Cardiac septum (tissue), 1 donor: ENCODE measurements at regions of chr10 and their contacts with region 1.

Region 1: DNA sequence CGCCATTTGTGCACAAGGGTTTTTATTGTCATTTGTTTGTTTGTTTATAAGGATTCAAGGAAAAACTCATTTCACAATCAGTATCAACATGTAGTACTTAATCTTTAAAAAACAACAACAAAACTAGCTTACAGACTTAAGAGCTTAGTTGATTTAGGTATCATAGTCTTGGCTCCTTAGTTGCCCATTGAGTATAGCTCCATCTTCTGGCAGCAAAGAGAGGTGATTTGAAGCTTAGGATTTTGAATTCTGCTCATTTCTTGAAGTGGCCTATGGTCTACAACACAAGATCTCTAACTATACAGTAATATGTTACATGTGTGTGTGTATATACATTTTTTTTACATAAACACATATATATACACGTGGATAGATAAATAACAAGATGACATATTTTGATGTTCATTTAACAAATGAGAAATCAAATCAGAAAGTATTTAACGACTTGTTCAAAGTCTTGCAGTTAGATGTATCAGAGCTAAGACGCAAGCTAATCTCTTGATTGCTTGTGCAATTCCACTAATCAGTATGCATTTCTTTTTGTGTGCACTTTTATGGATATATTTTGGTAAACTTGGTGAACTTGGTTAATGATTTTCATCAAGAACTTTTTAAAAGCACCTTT is 307.3 kb downstream of the CAMK1D start:
- DNase-seq: no peak

Region 2: DNA sequence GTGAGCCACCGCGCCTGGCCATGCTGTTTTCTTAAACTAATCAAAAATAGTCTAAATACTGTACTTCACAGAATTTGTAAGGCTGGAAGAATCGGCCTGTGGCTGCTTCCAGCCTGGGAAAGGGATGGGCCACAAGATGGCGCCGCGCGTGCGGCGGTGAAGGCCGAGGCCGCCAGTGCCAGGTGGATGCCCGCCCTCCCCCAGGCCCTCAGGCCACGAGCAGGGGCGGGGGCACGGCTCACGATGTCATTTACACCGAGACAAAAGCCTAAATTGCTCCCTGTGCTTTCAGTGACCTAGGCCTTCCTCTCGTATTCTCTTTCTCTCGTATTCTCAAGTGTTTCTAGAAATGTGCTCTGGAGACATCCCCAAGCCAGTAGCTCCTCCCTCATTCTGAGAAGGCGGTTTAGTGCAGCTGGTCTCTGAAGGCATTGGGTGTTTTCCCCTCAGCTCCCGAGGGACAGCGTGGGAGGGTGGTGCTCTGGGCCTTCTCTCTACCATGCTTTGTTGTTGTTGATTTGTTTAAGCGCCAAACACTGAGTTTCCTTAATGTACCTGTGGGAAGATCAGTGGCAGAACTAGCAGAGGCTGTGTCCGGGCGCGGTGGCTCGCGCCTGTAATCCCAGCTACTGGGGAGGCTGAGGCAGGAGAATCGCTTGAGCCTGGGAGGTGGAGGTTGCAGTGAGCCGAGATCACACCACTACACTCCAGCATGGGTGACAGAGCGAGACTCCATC is 392.3 kb before region 1 on chr10:
- intact Hi-C with region 1: loop called (anchors 2 kb)
- DNase-seq: peak; percentile 92

Region 3: DNA sequence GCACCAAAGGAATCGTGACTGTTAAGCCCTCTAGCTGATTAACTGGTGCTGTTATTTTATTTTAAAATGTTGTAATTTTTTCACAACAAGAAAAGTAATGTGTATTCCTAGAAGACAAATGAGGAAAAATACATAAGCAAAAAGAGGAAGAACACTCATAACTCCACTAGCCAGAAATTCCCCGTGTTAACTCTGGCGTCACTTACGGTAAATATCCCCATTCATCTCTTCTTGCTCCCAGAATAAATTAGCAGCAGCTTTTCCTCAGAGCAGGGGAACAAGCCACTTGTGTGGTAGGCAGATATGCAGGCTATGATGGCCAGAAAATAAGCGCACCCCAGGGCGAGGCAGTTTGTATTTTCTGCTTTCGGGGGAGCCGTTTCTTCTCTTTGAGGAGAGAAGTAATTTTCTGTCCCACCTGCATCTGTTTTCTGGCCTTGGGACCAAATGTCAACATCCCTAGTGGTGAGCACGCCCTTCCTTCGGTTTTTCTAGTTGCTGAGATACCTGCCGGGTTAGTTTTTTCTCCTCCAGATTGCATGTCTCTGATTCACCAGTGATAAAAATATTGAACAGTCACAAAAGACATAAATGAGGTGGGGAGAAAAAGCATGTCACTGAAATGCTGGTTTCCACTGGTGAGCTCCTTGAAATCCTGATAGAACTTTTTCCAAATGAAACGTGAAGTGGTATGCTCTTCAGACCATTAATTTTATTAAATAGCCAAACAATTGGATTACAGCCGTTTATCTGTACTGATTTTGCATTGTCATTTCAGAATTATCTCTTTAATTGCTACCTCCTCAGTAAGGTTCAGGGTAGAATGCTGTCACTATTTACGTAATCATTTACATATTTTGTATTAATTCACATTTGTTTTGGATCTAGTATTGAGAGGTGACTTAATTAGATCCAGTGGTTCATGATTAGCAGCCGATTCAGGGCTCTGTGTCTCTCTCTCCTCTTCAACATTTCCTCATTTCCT is 39.1 kb before region 1 on chr10:
- intact Hi-C with region 1: no loop called
- DNase-seq: no peak

Region 4: GRCh38 chr10:12699258-12699700 is 42.6 kb after region 1 on chr10:
- intact Hi-C with region 1: no loop called
- DNase-seq: no peak

Region 5: GRCh38 chr10:12884380-12884779 is 227.8 kb after region 1 on chr10:
- intact Hi-C with region 1: no loop called
- DNase-seq: no peak